Pancreas (tissue), 10 donors: ENCODE measurements at regions of chr21 and their contacts with region 1.

Region 1: GRCh38 chr21:41684381-41685245 is 82.2 kb downstream of the RIPK4 start:
- DNase-seq: peak in 4 of 6 donors; percentile 49 to 66 (median 56)
- ATAC-seq: peak; percentile 39 to 70 (median 59)
- H3K4me3 ChIP-seq: no peak overlapping the region
- H3K27ac ChIP-seq: peak overlapping the region; percentile 14 to 81 (median 72)
- H3K4me1 ChIP-seq: peaks cover 28 to 44% (median 30%) of the 10 kb centered on the region in 3 donors
- H3K27me3 ChIP-seq: no peaks in the 10 kb centered on the region
- CTCF ChIP-seq: no peak

Region 2: GRCh38 chr21:41054018-41054578 is 630.5 kb before region 1 on chr21:
- intact Hi-C with region 1: no loop called
- DNase-seq: no peak
- ATAC-seq: no peak
- H3K4me3 ChIP-seq: no peak overlapping the region
- H3K27ac ChIP-seq: no peak overlapping the region
- H3K4me1 ChIP-seq: no peaks in the 10 kb centered on the region
- H3K27me3 ChIP-seq: no peaks in the 10 kb centered on the region
- CTCF ChIP-seq: no peak

Region 3: DNA sequence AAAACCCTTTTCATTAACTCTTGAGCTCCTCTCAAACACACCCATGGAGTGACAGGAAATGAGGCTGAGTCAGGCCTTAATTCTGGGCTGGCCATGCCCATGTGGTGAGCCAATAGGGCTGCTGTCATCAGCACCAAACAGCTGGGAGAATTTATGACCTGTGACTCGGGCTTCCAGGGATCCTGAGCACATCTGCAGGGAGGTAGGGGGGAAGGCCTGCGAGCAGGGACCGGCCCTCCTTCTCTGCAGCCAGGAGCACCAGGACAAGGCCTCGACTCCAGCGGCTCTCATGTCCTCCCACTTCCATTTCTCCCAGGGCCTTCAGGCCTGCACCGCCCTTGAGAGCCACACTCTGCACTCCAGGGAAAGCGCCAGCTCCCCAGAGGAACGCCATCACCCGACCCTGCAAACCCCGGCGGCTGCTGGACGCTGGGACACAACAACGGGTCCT is 67.6 kb after region 1 on chr21:
- intact Hi-C with region 1: loop called in 1 of 3 experiments (anchors 10 kb)
- DNase-seq: peak in 2 of 6 donors; percentile 44 to 52
- ATAC-seq: peak; percentile 24 to 40 (median 33)
- H3K4me3 ChIP-seq: no peak overlapping the region
- H3K27ac ChIP-seq: peak overlapping the region in 2 of 4 donors; percentile 2 to 5
- H3K4me1 ChIP-seq: peaks cover 3 to 19% (median 9%) of the 10 kb centered on the region in 3 donors
- H3K27me3 ChIP-seq: no peaks in the 10 kb centered on the region
- CTCF ChIP-seq: no peak

Region 4: GRCh38 chr21:41796451-41797080 is 112.0 kb after region 1 on chr21:
- intact Hi-C with region 1: no loop called
- DNase-seq: no peak
- ATAC-seq: no peak
- H3K4me3 ChIP-seq: no peak overlapping the region
- H3K27ac ChIP-seq: no peak overlapping the region
- H3K4me1 ChIP-seq: no peaks in the 10 kb centered on the region
- H3K27me3 ChIP-seq: no peaks in the 10 kb centered on the region
- CTCF ChIP-seq: no peak